ENCODE measurements at regions of chr12 and their contacts with region 1.

Region 1: GRCh38 chr12:4763549-4763948 is 43.3 kb downstream of the GALNT8 start:
- DNase-seq: no peak
- ATAC-seq: no peak
- H3K4me3 Mint-ChIP-seq: no peak overlapping the region
- H3K27ac Mint-ChIP-seq: no peak overlapping the region
- H3K4me1 Mint-ChIP-seq: peaks cover 2% of the 10 kb centered on the region
- H3K27me3 Mint-ChIP-seq: no peaks in the 10 kb centered on the region
- CTCF ChIP-seq: no peak

Region 2: DNA sequence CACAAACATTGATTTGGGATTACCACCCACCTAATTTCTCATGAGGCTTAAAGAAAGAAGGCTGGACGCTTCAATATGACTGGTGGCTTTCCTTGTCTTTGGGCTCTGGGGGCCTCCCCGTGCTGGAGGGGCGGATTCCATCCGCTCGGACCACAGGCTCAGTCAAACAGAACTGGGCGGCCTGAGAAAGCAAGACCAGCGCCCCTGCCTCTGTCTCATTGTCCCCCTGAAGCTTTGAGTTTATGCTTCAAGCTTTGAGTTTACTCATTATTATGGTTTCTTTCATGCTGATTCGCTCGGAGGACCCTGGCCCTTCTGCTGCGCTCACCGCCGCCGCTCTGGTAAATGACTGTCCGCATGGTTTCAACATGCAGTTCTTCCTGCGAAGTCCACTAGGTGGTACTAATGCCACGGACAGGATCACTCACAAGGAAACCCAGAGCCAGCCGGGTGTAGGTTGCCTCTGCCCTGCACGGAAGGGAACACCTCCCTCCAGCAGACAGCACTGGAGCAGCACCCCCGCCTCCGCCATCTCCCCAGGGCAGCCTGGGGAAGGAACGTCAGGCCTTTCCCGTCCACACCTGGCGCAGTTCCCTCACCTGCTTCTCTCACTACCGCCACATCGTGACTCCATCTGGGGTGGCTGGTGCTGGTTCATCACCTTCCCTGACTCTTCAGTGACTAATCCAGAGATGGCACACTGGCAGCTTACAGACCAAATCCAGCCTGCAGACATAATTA is 455.8 kb before region 1 on chr12:
- CTCF ChIA-PET with region 1: no interaction called
- POLR2A ChIA-PET with region 1: no interaction called
- intact Hi-C with region 1: loop called (anchors 2 kb)
- DNase-seq: no peak
- ATAC-seq: peak; percentile 68
- H3K4me3 Mint-ChIP-seq: no peak overlapping the region
- H3K27ac Mint-ChIP-seq: no peak overlapping the region
- H3K4me1 Mint-ChIP-seq: no peaks in the 10 kb centered on the region
- H3K27me3 Mint-ChIP-seq: no peaks in the 10 kb centered on the region
- CTCF ChIP-seq: no peak

Region 3: DNA sequence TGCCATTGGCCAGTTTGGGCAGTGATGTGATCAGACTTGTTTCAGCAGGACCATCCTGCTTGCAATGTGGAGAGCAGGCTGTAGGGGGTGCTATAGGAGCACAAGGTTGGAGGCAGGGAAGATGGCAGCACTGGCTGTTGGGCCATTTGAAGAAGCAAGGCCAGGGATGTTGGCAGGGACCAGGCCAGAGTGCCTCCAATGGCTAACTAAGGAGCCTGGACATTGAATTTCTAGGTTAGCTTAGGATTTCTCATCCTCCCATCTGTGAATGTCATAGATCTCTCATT is 407.6 kb before region 1 on chr12:
- CTCF ChIA-PET with region 1: no interaction called
- POLR2A ChIA-PET with region 1: no interaction called
- intact Hi-C with region 1: loop called (anchors 5 kb)
- DNase-seq: no peak
- ATAC-seq: no peak
- H3K4me3 Mint-ChIP-seq: no peak overlapping the region
- H3K27ac Mint-ChIP-seq: no peak overlapping the region
- H3K4me1 Mint-ChIP-seq: no peaks in the 10 kb centered on the region
- H3K27me3 Mint-ChIP-seq: no peaks in the 10 kb centered on the region
- CTCF ChIP-seq: no peak

Region 4: DNA sequence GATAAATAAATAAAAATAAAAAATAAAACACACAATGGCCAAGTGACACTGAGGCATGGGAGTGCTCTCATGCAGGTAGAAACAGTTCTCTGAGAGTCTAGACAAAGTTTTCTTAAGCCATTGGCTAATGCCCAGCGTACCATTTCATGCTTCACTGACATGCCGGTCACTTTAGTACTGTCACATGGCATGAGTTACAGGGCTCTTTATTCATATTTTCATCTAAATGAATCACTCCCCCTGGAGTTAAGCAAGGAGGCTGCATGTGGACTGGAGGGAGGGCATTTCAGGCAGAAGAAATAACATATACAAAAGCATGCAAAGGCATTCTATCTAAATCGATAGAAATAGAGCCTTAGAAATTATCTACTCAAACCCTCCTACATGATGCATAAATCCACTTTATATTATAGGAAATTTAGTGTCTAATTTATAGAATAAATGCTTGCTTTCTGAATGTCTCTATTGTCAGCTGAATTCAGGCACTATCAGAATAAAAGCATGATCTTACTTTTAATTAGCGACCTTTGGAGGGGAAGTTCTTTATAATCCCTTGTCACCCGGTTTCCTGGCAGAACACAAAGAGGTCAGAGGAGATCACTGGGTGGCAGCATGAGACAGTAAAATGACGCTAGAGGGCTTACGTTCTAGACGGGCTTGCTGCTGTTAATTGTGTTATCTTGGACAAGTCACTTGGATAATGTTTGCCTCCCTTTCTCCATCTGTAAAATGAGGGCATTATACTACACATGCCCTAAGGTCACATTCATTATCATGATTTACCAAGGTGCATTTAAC is 184.0 kb before region 1 on chr12:
- CTCF ChIA-PET with region 1: interaction called, 25 read pairs
- POLR2A ChIA-PET with region 1: no interaction called
- intact Hi-C with region 1: loop called (anchors 1 kb)
- DNase-seq: no peak
- ATAC-seq: peak; percentile 56
- H3K4me3 Mint-ChIP-seq: no peak overlapping the region
- H3K27ac Mint-ChIP-seq: no peak overlapping the region
- H3K4me1 Mint-ChIP-seq: peaks cover 11% of the 10 kb centered on the region
- H3K27me3 Mint-ChIP-seq: no peaks in the 10 kb centered on the region
- CTCF ChIP-seq: no peak

Region 5: DNA sequence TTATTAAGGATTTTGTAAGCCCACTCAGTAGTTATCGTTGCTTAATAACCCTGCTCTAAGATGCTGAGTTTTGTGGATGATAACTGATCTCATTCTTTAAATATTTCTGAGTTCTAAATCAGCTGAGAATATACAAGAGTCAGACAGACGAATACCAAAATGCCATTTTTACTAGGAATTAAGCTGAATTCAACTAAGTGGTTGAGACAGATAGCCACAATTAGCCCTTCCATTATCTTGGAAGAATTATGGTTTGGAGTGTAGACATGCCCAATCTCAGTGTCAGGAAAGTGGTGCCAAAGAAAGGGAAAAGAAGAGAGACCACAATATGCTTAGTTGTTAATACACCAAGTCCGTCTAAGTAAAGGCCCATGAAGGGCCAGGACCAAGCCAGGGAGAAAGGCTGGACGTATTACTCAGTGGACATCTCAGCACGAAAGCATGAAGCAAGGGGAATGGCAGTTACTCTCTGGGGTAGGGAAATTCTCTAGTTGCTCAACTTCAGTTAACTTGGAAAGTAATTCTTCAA is 338.8 kb after region 1 on chr12:
- CTCF ChIA-PET with region 1: no interaction called
- POLR2A ChIA-PET with region 1: no interaction called
- intact Hi-C with region 1: no loop called
- DNase-seq: no peak
- ATAC-seq: no peak
- H3K4me3 Mint-ChIP-seq: no peak overlapping the region
- H3K27ac Mint-ChIP-seq: no peak overlapping the region
- H3K4me1 Mint-ChIP-seq: no peaks in the 10 kb centered on the region
- H3K27me3 Mint-ChIP-seq: peaks cover 19% of the 10 kb centered on the region
- CTCF ChIP-seq: no peak

Measured in activated B cell treated with CpG ODN at 0.5 μM for 24 hours (primary cell).